ENCODE measurements at regions of chr21 and their contacts with region 1.

Region 1: DNA sequence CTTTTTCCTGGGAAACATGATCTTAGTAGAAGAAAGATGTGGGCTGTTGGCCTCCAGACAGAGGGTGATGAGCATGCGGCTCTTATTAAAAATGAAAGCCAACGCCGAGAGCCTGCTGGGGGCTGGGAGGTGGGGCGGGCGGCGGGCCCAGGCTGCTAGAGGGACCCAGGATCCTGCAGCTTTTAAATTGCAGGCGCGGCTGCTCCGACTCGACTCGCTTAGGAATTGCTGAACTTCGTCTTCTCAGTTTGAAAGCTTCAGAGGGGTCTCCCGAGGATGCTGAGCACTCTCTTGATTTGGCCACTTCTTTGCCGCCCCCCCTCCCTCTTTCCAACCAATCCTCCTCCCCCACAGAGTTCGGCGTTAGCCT is 1.2 kb downstream of the AGPAT3 start:
- DNase-seq: peak in 5 of 9 experiments; percentile 21 to 65 (median 48)
- ATAC-seq: peak; percentile 37
- H3K4me3 ChIP-seq: peak overlapping the region; percentile 56 to 61
- H3K4me3 Mint-ChIP-seq: peak overlapping the region; percentile 81
- H3K27ac ChIP-seq: peak overlapping the region; percentile 45 to 64
- H3K27ac Mint-ChIP-seq: peak overlapping the region; percentile 85
- H3K4me1 ChIP-seq: peaks cover 23% of the 10 kb centered on the region
- H3K4me1 Mint-ChIP-seq: peaks cover 49% of the 10 kb centered on the region
- H3K27me3 ChIP-seq: no peaks in the 10 kb centered on the region
- H3K27me3 Mint-ChIP-seq: no peaks in the 10 kb centered on the region
- CTCF ChIP-seq: no peak

Region 2: GRCh38 chr21:42892931-42893755 is 973.1 kb before region 1 on chr21 and contains the start of gene NDUFV3:
- CTCF ChIA-PET with region 1: no interaction called
- POLR2A ChIA-PET with region 1: no interaction called
- intact Hi-C with region 1: loop called in 1 of 2 experiments (anchors 5 kb)
- DNase-seq: peak; percentile 100
- ATAC-seq: peak; percentile 96
- H3K4me3 ChIP-seq: peak within 1 kb of the TSS; percentile 70 to 94
- H3K4me3 Mint-ChIP-seq: peak within 1 kb of the TSS; percentile 85
- H3K27ac ChIP-seq: peak within 1 kb of the TSS; percentile 92 to 93
- H3K27ac Mint-ChIP-seq: peak within 1 kb of the TSS; percentile 98
- H3K4me1 ChIP-seq: peaks cover 14% of the 10 kb centered on the region
- H3K4me1 Mint-ChIP-seq: peaks cover 23% of the 10 kb centered on the region
- H3K27me3 ChIP-seq: no peaks in the 10 kb centered on the region
- H3K27me3 Mint-ChIP-seq: no peaks in the 10 kb centered on the region
- CTCF ChIP-seq: no peak
- total RNA-seq, gene NDUFV3: 18.0 to 18.2 TPM

Region 3: GRCh38 chr21:43921979-43922945 is 56.0 kb after region 1 on chr21:
- CTCF ChIA-PET with region 1: interaction called, 4 read pairs
- POLR2A ChIA-PET with region 1: interaction called, 4 read pairs
- intact Hi-C with region 1: loop called (anchors 1 kb)
- DNase-seq: peak; percentile 29 to 91 (median 77)
- ATAC-seq: peak; percentile 80
- H3K4me3 ChIP-seq: peak overlapping the region; percentile 15 to 36
- H3K4me3 Mint-ChIP-seq: peak overlapping the region; percentile 78
- H3K27ac ChIP-seq: peak overlapping the region; percentile 74 to 78
- H3K27ac Mint-ChIP-seq: peak overlapping the region; percentile 96
- H3K4me1 ChIP-seq: peaks cover 46% of the 10 kb centered on the region
- H3K4me1 Mint-ChIP-seq: peaks cover 49% of the 10 kb centered on the region
- H3K27me3 ChIP-seq: peaks cover 0 to 2% of the 10 kb centered on the region in 2 experiments
- H3K27me3 Mint-ChIP-seq: no peaks in the 10 kb centered on the region
- CTCF ChIP-seq: no peak

Measured in CD8-positive, alpha-beta T cell (primary cell).